ENCODE measurements at regions of chr7 and their contacts with region 1.

Region 1: GRCh38 chr7:12067141-12067831 is 143.8 kb upstream of the TMEM106B start:
- DNase-seq: peak; percentile 66
- ATAC-seq: peak; percentile 91
- H3K4me3 ChIP-seq: no peak overlapping the region
- H3K27ac ChIP-seq: no peak overlapping the region
- H3K4me1 ChIP-seq: no peaks in the 10 kb centered on the region
- H3K27me3 ChIP-seq: no peaks in the 10 kb centered on the region
- CTCF ChIP-seq: peak; percentile 74
- POLR2A ChIP-seq: no peak
- RAD21 ChIP-seq: peak; percentile 84

Region 2: GRCh38 chr7:11427686-11428273 is 639.5 kb before region 1 on chr7:
- CTCF ChIA-PET with region 1: no interaction called
- POLR2A ChIA-PET with region 1: no interaction called
- dilution Hi-C with region 1: no loop called
- in situ Hi-C with region 1: loop called (anchors 25 kb)
- intact Hi-C with region 1: loop called (anchors 1 kb)
- DNase-seq: peak; percentile 56
- ATAC-seq: peak; percentile 73
- H3K4me3 ChIP-seq: no peak overlapping the region
- H3K27ac ChIP-seq: no peak overlapping the region
- H3K4me1 ChIP-seq: no peaks in the 10 kb centered on the region
- H3K27me3 ChIP-seq: no peaks in the 10 kb centered on the region
- CTCF ChIP-seq: peak; percentile 68
- POLR2A ChIP-seq: no peak
- RAD21 ChIP-seq: peak; percentile 64

Region 3: DNA sequence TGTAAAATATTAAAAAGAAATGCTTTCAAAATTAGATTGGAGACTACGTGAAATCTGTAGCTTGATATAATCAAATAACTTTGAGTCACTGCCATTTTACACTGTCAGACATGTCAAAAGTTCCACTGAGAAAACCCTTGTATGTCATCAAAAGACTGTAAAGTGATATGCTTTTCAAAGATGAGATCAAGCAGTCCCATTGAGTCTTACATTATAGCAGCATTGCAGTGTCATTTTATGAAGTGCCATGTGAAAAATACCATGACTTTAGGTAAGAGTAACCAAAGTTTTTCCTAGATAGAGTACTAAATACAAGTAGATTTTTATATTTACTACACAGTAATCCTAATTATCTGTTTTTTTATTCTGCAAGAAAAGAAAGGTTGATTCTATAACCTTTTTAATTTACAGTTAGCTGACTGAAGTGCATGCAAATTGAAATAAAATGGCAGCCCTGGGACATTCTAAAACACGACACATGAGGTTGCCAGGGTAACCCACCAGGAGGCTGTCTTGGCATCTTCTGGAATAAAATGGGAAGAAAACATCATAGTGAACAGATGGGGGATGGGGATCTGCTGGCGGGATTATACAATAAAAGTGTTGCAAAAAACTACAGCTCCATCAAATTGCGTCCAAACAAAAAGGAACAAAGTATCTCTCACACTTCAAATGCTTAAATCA is 52.5 kb after region 1 on chr7:
- CTCF ChIA-PET with region 1: no interaction called
- POLR2A ChIA-PET with region 1: no interaction called
- dilution Hi-C with region 1: no loop called
- in situ Hi-C with region 1: no loop called
- intact Hi-C with region 1: no loop called
- DNase-seq: no peak
- ATAC-seq: no peak
- H3K4me3 ChIP-seq: no peak overlapping the region
- H3K27ac ChIP-seq: no peak overlapping the region
- H3K4me1 ChIP-seq: no peaks in the 10 kb centered on the region
- H3K27me3 ChIP-seq: no peaks in the 10 kb centered on the region
- CTCF ChIP-seq: no peak
- POLR2A ChIP-seq: no peak
- RAD21 ChIP-seq: no peak

Region 4: DNA sequence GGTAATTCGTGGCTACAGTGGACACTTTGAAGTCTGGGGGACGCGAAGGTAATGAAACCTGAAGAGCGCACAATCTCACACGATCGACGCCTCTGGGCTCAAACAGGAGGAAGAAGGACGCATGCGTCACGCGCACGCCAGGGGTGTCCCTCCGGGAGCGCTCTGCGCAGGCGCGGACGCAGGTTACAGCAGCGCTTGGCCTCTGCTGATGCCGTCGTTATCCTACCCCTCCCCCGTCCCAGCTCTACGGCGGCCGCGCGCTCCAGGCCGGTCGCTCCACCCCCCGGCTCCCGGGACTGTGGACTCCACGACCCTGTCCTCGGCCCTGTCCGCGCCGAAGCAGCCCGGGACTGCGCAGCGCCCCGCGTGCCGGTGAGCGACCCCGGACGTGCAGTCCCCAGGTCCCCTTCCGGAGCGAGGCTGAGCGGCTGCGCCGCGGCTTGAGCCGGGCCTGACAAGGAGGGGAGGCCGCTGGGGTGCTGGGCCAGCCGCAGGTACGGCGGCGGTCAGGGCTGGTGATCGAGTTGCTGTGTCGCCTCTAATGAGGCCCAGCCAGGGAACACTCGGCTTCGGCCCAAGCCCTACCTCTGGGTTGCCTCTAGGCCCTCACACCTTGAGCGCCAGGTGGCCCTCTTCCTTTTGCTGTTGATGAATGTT is 143.9 kb after region 1 on chr7 and contains the start of gene TMEM106B:
- CTCF ChIA-PET with region 1: no interaction called
- POLR2A ChIA-PET with region 1: no interaction called
- dilution Hi-C with region 1: no loop called
- in situ Hi-C with region 1: no loop called
- intact Hi-C with region 1: loop called (anchors 5 kb)
- DNase-seq: peak; percentile 92
- ATAC-seq: peak; percentile 97
- H3K4me3 ChIP-seq: peak within 1 kb of the TSS; percentile 70
- H3K27ac ChIP-seq: peak within 1 kb of the TSS; percentile 81
- H3K4me1 ChIP-seq: peaks cover 3% of the 10 kb centered on the region; the same call in 1 of the 2 replicates
- H3K27me3 ChIP-seq: peaks cover 3% of the 10 kb centered on the region
- CTCF ChIP-seq: no peak
- POLR2A ChIP-seq: peak; percentile 67
- RAD21 ChIP-seq: no peak
- total RNA-seq, gene TMEM106B: 59.5 and 82.8 TPM in 2 replicates

Region 5: GRCh38 chr7:12291870-12292269 is 224.6 kb after region 1 on chr7:
- CTCF ChIA-PET with region 1: interaction called, 5 read pairs
- POLR2A ChIA-PET with region 1: no interaction called
- dilution Hi-C with region 1: no loop called
- in situ Hi-C with region 1: no loop called
- intact Hi-C with region 1: loop called (anchors 1 kb)
- DNase-seq: peak; percentile 1
- ATAC-seq: no peak
- H3K4me3 ChIP-seq: no peak overlapping the region
- H3K27ac ChIP-seq: no peak overlapping the region
- H3K4me1 ChIP-seq: no peaks in the 10 kb centered on the region
- H3K27me3 ChIP-seq: no peaks in the 10 kb centered on the region
- CTCF ChIP-seq: peak; percentile 21; the same call in 1 of the 2 replicates
- POLR2A ChIP-seq: no peak
- RAD21 ChIP-seq: peak; percentile 31; the same call in 1 of the 2 replicates

Region 6: GRCh38 chr7:12389089-12389700 is 321.9 kb after region 1 on chr7:
- CTCF ChIA-PET with region 1: no interaction called
- POLR2A ChIA-PET with region 1: no interaction called
- dilution Hi-C with region 1: no loop called
- in situ Hi-C with region 1: no loop called
- intact Hi-C with region 1: loop called (anchors 2 kb)
- DNase-seq: peak; percentile 61
- ATAC-seq: peak; percentile 76; the same call in 1 of the 2 replicates
- H3K4me3 ChIP-seq: no peak overlapping the region
- H3K27ac ChIP-seq: no peak overlapping the region
- H3K4me1 ChIP-seq: no peaks in the 10 kb centered on the region
- H3K27me3 ChIP-seq: no peaks in the 10 kb centered on the region
- CTCF ChIP-seq: peak; percentile 73
- POLR2A ChIP-seq: no peak
- RAD21 ChIP-seq: peak; percentile 52

Measured in IMR-90 (cell line).